Posterior cingulate gyrus (tissue), 11 donors: ENCODE measurements at regions of chr21 and their contacts with region 1.

Region 1: DNA sequence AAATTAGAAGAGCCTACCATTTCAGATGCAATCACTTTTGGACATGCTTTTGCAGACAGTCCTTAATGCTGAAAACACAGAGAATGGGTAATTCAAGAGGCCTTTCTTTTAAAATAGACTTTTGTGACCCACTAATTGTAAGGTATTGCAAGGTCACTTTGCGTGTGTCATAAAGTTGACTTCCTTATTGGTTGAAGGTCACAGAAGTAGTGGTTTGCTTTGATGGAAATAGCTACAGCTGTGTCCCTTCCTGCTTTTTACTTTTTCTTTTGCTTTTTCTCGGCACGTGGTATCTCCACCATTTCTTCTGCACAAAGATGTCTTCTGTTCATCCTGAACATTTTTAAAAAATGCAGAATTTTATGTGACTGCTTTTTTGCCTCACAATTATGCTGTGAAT is 146.8 kb downstream of the DYRK1A start:
- DNase-seq: no peak

Region 2: DNA sequence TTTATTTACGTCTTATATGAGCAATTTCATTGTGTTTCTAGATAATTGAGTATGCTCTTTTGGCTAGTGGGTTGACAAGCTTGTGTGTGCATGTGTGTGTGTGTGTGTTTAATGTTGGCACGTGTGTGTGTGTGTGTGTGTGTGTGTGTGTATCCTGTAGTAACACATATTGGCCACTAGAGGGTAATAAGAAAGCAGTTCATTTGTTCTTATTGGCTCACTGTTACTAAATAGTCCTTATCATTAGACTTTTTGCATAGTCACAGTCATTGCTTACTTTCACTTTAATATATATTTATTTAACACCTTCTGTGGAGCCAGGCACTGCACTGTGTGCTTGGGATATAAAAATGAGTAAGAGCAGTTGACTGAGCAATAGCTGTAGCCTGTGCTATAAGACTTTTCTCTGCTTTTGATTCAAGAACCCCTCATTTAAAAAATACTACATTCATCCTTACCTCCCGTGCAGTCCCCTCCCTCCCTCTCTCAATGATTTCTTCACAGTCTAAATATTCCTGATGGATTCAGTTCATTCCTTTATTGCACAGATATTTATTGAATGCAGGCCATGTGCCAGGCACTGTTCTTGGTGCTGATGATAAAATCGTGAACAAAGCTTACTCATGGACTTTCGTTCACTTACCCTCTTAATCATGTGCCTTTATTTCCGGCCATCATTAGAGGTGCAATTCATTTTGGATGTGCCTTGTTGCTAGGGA is 50.1 kb before region 1 on chr21:
- intact Hi-C with region 1: loop called (anchors 2 kb)
- DNase-seq: no peak

Region 3: GRCh38 chr21:37642493-37642892 is 129.1 kb after region 1 on chr21:
- intact Hi-C with region 1: no loop called
- DNase-seq: no peak